ENCODE measurements at regions of chr11 and their contacts with region 1.

Region 1: DNA sequence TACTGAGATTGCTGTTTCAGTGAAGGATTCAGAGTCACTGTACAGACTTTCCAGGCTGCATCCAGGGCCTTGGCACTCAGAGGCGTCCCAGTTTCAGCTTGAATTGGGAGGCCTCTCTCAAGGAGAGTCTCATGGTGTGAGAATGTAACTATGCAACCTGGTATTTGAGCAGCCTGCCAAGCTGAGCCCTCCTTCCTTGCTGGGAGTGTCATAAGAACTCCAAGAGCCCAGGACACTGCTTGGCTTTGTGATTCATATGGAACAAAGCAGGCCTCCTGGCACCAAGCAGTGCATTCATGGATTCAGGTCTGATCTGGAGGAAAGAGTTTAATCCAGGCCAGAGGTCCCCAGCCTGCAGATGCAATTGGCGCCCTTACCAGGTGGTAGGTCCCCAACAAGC is 171.7 kb downstream of the DBX1 start:
- DNase-seq: peak; percentile 53
- H3K4me3 Mint-ChIP-seq: no peak overlapping the region
- H3K27ac Mint-ChIP-seq: peak overlapping the region; percentile 98
- H3K4me1 Mint-ChIP-seq: peaks cover 41% of the 10 kb centered on the region
- H3K27me3 Mint-ChIP-seq: no peaks in the 10 kb centered on the region
- CTCF ChIP-seq: no peak

Region 2: DNA sequence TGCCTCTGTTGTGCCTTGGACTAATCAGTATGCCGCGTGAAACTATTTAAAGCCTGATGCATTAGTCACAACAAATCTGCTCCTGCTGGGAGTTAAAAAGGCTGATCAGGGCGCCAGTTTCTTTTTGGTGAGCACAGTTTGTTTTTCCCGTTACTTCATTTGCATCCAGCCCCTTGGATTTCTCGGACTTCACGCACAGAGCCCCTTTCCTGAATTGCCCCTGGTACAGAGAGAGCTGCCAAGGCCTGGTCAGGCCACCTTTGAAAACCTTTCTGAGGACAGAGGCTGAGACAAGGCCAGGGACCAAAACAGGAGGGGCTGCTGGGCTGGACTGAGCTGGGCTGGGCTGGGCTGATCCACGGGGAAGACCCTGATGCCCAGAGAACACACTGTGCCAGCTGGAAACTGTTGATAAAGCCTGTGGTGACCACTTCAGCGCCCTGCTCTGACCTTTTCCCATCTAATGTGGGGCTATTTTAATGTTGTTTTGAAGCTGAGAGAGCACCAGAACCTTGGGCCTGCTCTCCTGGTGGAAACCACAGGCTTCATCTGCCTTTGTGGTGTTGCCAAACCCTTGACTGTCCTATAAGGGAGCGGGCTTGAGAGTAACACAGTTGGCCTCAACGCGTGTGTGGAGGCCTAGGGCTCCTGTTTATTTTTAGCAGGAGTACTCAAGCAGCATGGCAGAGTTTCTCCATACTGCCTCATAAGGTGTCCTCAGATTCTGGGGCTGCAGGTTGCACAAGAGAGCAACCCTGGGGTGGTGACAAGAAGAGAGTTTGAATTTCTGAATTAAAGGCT is 231.7 kb before region 1 on chr11:
- CTCF ChIA-PET with region 1: no interaction called
- POLR2A ChIA-PET with region 1: no interaction called
- intact Hi-C with region 1: no loop called
- DNase-seq: no peak
- H3K4me3 Mint-ChIP-seq: no peak overlapping the region
- H3K27ac Mint-ChIP-seq: no peak overlapping the region
- H3K4me1 Mint-ChIP-seq: no peaks in the 10 kb centered on the region
- H3K27me3 Mint-ChIP-seq: no peaks in the 10 kb centered on the region
- CTCF ChIP-seq: no peak

Region 3: DNA sequence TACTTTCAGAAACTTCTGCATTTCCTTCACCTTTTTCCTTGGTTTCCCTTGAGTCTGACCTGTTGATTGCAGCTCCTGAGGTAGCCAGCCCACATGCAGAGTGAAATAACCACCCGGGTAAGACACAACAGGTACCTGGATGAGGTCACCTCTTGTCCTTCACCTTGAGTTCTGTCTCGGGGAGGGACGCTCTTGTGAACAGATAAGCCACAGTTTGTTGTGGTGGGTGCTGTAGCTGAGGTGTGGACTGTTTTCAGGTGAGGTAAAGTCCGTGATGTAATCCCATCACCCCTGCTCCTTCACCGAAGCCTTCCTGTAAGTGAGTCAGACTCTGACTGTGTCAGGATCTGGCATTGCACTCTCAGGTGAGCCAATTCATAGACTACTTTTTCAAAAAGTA is 92.8 kb before region 1 on chr11:
- CTCF ChIA-PET with region 1: no interaction called
- POLR2A ChIA-PET with region 1: no interaction called
- intact Hi-C with region 1: no loop called
- DNase-seq: peak; percentile 65
- H3K4me3 Mint-ChIP-seq: no peak overlapping the region
- H3K27ac Mint-ChIP-seq: no peak overlapping the region
- H3K4me1 Mint-ChIP-seq: peaks cover 18% of the 10 kb centered on the region
- H3K27me3 Mint-ChIP-seq: no peaks in the 10 kb centered on the region
- CTCF ChIP-seq: no peak

Region 4: DNA sequence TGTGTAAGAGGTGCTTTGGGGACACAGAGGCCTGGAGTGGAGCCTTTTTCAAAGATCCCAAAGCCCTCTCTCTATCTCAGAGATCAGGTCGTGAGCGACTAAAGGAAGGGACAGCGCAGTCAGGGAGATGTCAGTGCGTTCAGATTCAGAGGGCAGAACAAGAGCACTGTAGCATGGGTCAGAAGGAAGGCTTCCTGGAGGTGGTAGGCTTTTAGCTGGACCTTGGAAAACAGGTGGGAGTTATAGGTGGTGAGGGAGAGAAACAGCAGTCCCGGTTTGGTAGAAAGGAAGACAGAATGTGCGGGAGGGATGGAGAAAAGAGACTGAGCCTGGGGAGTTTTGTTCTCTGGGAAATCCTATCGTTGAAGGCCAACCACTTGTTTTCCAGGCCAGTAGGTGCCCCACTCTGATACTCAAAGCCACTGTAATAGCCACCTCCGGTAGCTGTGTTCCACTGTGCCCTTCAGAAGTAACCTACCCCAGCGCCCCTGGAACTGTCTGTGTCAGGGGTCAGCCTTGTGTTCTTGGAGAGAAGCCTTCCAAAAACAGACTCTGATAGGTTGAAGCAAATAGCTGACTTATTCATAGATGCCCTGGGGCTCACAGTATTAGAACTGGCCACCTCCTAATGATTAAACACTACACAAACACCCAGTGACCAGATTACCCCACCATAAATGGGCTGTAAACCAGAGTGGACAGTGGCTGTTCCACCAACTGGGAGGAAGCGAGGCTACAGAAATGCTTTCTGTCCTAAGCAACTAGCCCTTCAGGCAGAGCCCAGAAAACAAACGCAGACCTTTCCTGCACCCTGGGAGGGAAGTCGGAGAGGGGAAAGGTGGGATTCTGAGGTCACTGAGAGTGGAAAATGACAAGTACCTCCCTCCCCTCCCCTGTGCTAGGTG is 14.0 kb after region 1 on chr11:
- CTCF ChIA-PET with region 1: interaction called, 17 read pairs
- POLR2A ChIA-PET with region 1: interaction called, 104 read pairs
- intact Hi-C with region 1: no loop called
- DNase-seq: no peak
- H3K4me3 Mint-ChIP-seq: no peak overlapping the region
- H3K27ac Mint-ChIP-seq: peak overlapping the region; percentile 96
- H3K4me1 Mint-ChIP-seq: peaks cover 47% of the 10 kb centered on the region
- H3K27me3 Mint-ChIP-seq: no peaks in the 10 kb centered on the region
- CTCF ChIP-seq: no peak

Region 5: DNA sequence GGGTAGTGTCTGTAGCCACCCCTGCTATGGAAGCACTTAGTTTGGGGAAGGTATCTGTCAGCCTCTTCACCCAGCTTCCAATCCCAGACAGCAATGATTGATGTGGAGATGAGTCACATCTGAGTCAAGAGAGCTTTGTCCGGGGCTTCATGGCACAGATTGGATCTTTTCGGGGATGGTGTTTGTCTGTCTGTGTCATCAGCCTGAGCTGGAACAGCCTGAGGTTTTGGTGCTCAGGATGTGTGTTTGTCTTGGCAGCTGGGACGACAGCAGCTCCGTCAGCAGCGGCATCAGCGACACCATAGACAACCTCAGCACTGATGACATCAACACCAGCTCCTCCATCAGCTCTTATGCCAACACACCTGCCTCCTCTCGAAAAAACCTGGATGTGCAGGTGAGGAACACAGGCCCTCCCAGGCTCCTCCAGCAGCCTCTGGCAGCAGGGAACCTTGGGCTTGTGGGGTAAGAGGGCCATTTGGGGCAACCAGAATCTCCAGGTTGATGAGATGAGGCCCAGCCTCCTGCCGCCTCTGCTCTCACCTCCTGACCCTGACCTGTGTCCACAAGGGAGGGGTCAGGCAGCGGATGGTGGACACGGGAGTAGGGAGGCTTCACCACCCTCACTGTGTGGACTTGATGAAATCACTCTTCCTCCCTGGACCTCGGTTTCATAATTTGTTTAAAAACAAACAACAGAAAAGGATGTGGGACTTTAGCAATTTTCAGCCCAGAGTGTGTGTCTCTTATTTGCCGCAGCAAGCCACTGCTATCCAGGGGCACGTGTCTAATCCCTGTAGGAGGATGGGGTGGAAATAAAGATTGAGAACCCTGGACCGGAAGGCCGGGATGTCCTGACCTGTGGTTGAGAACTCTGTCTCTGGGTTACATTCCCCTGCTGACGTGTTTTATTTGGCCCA is 47.4 kb after region 1 on chr11:
- CTCF ChIA-PET with region 1: no interaction called
- POLR2A ChIA-PET with region 1: interaction called, 11 read pairs
- intact Hi-C with region 1: no loop called
- DNase-seq: peak; percentile 99
- H3K4me3 Mint-ChIP-seq: peak overlapping the region; percentile 59
- H3K27ac Mint-ChIP-seq: peak overlapping the region; percentile 92
- H3K4me1 Mint-ChIP-seq: peaks cover 66% of the 10 kb centered on the region
- H3K27me3 Mint-ChIP-seq: no peaks in the 10 kb centered on the region
- CTCF ChIP-seq: no peak

Region 6: DNA sequence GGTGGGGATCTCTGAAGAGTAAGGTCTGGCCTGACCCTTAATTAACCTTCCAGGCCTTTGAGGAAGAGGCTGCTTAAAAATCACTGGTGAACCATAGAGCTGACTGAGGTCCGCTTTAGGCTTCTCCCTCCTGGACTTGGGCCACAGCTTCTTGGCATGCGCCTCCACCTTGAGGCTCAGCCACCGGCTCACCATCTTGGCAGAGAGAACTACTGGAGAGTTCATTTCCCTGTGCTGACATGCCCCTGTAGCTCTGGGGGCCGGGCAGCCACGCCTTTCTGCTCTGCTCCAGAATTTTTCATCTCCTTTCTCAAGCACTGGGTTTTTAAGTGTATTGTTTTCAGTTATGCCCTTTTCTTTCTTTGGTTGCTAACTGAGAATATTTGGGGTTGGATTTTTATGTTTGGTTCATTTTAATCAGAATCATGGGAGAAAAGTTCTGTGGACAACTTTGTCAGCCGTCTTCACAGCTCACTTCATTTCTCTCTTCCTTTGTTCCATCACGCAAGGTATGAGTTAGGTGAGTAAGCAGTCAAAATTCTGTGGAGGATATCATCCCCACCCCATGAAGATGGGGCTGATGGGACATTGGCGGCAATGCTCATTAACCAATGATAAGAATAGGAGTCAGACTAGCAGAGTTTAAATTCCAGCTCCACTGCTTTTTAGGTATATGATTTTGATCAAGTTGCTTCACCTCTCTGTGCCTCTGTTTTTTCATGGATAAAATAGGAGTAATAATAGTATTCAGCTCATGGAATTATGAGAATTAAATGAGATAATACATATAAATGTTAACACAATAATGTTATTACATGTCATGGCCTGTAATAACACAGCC is 67.7 kb after region 1 on chr11:
- CTCF ChIA-PET with region 1: interaction called, 3 read pairs
- POLR2A ChIA-PET with region 1: interaction called, 22 read pairs
- intact Hi-C with region 1: no loop called
- DNase-seq: peak; percentile 92
- H3K4me3 Mint-ChIP-seq: peak overlapping the region; percentile 26
- H3K27ac Mint-ChIP-seq: peak overlapping the region; percentile 90
- H3K4me1 Mint-ChIP-seq: peaks cover 67% of the 10 kb centered on the region
- H3K27me3 Mint-ChIP-seq: no peaks in the 10 kb centered on the region
- CTCF ChIP-seq: no peak

Measured in MCF 10A (cell line).